CD4-positive, alpha-beta memory T cell (primary cell): ENCODE measurements at regions of chr19 and their contacts with region 1.

Region 1: GRCh38 chr19:18636183-18636968 is 452 bp upstream of the KLHL26 start:
- DNase-seq: peak; percentile 97 to 99 (median 99)
- H3K4me3 ChIP-seq: peak overlapping the region; percentile 47 to 82
- H3K4me3 Mint-ChIP-seq: peak overlapping the region; percentile 84 to 90 (median 88)
- H3K27ac ChIP-seq: peak overlapping the region; percentile 84
- H3K27ac Mint-ChIP-seq: peak overlapping the region; percentile 77 to 96 (median 94)
- H3K4me1 ChIP-seq: peaks cover 24% of the 10 kb centered on the region
- H3K4me1 Mint-ChIP-seq: peaks cover 20 to 45% (median 33%) of the 10 kb centered on the region in 4 donors
- H3K27me3 ChIP-seq: no peaks in the 10 kb centered on the region
- H3K27me3 Mint-ChIP-seq: peaks cover 0 to 2% of the 10 kb centered on the region in 2 donors

Region 2: GRCh38 chr19:18203863-18204393 is 432.4 kb before region 1 on chr19 and contains the start of gene RAB3A:
- CTCF ChIA-PET with region 1: no interaction called
- POLR2A ChIA-PET with region 1: no interaction called
- intact Hi-C with region 1: loop called (anchors 2 kb)
- DNase-seq: peak; percentile 98 to 100 (median 100)
- H3K4me3 ChIP-seq: peak within 1 kb of the TSS; percentile 84 to 93
- H3K4me3 Mint-ChIP-seq: peak within 1 kb of the TSS; percentile 91 to 98 (median 96)
- H3K27ac ChIP-seq: peak within 1 kb of the TSS; percentile 63
- H3K27ac Mint-ChIP-seq: peak within 1 kb of the TSS; percentile 79 to 98 (median 98)
- H3K4me1 ChIP-seq: peaks cover 23% of the 10 kb centered on the region
- H3K4me1 Mint-ChIP-seq: peaks cover 13 to 33% (median 21%) of the 10 kb centered on the region in 4 donors
- H3K27me3 ChIP-seq: no peaks in the 10 kb centered on the region
- H3K27me3 Mint-ChIP-seq: peaks cover 0 to 1% of the 10 kb centered on the region in 2 donors
- total RNA-seq, gene RAB3A: 4.7 to 4.8 TPM

Region 3: DNA sequence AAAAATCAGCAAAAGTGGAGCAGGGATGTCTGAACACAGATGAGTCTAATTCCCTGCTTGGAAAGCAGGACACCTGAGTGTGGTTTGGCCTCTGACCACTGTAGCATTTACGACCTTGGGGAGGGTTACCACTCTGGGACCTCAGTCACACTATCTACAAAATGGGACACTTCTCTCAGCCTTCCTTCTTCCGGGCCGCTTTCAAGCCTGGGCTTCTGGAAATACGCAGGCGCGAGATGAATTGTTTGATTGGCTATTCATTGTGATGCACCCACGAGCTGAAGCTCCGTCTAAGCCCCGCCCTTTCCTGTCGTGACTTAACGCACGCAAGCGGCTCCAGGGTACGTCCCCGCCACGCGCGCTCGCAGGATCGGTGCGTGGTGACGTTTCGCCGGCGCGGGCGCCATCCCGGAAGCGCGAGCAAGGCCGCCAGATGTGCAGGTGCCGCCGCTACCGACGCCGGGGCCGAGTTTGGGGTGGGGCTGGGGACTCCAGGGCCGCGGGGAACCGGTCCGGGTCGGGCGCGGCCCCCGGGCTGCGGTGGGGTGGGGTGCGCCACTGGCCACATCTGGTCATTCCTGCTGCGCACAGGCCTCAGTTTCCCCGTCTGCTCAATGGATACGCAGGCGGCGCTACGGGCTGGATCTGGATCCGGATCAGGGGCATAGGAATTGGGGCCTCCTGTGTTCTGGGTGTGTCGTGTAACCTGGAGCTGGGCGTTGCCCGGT is 78.7 kb before region 1 on chr19 and contains the start of gene KXD1:
- CTCF ChIA-PET with region 1: no interaction called
- POLR2A ChIA-PET with region 1: interaction called, 3 read pairs
- intact Hi-C with region 1: loop called (anchors 1 kb)
- DNase-seq: peak; percentile 95 to 100 (median 99)
- H3K4me3 ChIP-seq: peak within 1 kb of the TSS; percentile 81 to 97
- H3K4me3 Mint-ChIP-seq: peak within 1 kb of the TSS; percentile 86 to 97 (median 93)
- H3K27ac ChIP-seq: peak within 1 kb of the TSS; percentile 98
- H3K27ac Mint-ChIP-seq: peak within 1 kb of the TSS; percentile 94 to 98 (median 96)
- H3K4me1 ChIP-seq: peaks cover 25% of the 10 kb centered on the region
- H3K4me1 Mint-ChIP-seq: peaks cover 9 to 35% (median 17%) of the 10 kb centered on the region in 4 donors
- H3K27me3 ChIP-seq: no peaks in the 10 kb centered on the region
- H3K27me3 Mint-ChIP-seq: no peaks in the 10 kb centered on the region
- total RNA-seq, gene KXD1: 95.3 to 95.6 TPM

Region 4: GRCh38 chr19:18683213-18683939 is 47.0 kb after region 1 on chr19 and contains the start of gene CRTC1:
- CTCF ChIA-PET with region 1: no interaction called
- POLR2A ChIA-PET with region 1: interaction called, 3 read pairs
- intact Hi-C with region 1: loop called (anchors 2 kb)
- DNase-seq: peak; percentile 93 to 97 (median 95)
- H3K4me3 ChIP-seq: peak within 1 kb of the TSS; percentile 70 to 86
- H3K4me3 Mint-ChIP-seq: peak within 1 kb of the TSS; percentile 86 to 92 (median 88)
- H3K27ac ChIP-seq: peak within 1 kb of the TSS; percentile 70
- H3K27ac Mint-ChIP-seq: peak within 1 kb of the TSS; percentile 82 to 95 (median 93)
- H3K4me1 ChIP-seq: peaks cover 20% of the 10 kb centered on the region
- H3K4me1 Mint-ChIP-seq: peaks cover 11 to 41% (median 21%) of the 10 kb centered on the region in 4 donors
- H3K27me3 ChIP-seq: no peaks in the 10 kb centered on the region
- H3K27me3 Mint-ChIP-seq: no peaks in the 10 kb centered on the region
- total RNA-seq, gene CRTC1: 19.6 to 20.8 TPM

Region 5: GRCh38 chr19:18831524-18832305 is 195.3 kb after region 1 on chr19 and contains the start of gene UPF1:
- CTCF ChIA-PET with region 1: no interaction called
- POLR2A ChIA-PET with region 1: interaction called, 4 read pairs
- intact Hi-C with region 1: loop called (anchors 1 kb)
- DNase-seq: peak; percentile 94 to 97 (median 95)
- H3K4me3 ChIP-seq: peak within 1 kb of the TSS; percentile 64 to 85
- H3K4me3 Mint-ChIP-seq: peak within 1 kb of the TSS; percentile 90 to 99 (median 95)
- H3K27ac ChIP-seq: peak within 1 kb of the TSS; percentile 75
- H3K27ac Mint-ChIP-seq: peak within 1 kb of the TSS; percentile 89 to 96 (median 93)
- H3K4me1 ChIP-seq: peaks cover 36% of the 10 kb centered on the region
- H3K4me1 Mint-ChIP-seq: peaks cover 29 to 47% (median 36%) of the 10 kb centered on the region in 4 donors
- H3K27me3 ChIP-seq: no peaks in the 10 kb centered on the region
- H3K27me3 Mint-ChIP-seq: peaks cover 2 to 5% of the 10 kb centered on the region in 2 donors
- total RNA-seq, gene UPF1: 127 to 130 TPM